Sigmoid colon (tissue), 7 donors: ENCODE measurements at regions of chr12 and their contacts with region 1.

Region 1: GRCh38 chr12:51531978-51532497 is 59.0 kb upstream of the SCN8A start:
- DNase-seq: peak; percentile 70
- H3K4me3 ChIP-seq: no peak overlapping the region
- H3K27ac ChIP-seq: no peak overlapping the region
- H3K4me1 ChIP-seq: peaks cover 0 to 3% (median 0%) of the 10 kb centered on the region in 4 donors
- H3K27me3 ChIP-seq: peaks cover 0 to 34% (median 3%) of the 10 kb centered on the region in 3 donors
- CTCF ChIP-seq: peak; percentile 33 to 76 (median 64)
- EP300 ChIP-seq: no peak
- POLR2A ChIP-seq: no peak

Region 2: GRCh38 chr12:51269174-51270066 is 262.6 kb before region 1 on chr12:
- intact Hi-C with region 1: loop called (anchors 10 kb)
- DNase-seq: no peak
- H3K4me3 ChIP-seq: peak overlapping the region; percentile 50 to 81 (median 60)
- H3K27ac ChIP-seq: peak overlapping the region in 3 of 4 donors; percentile 60 to 68 (median 61)
- H3K4me1 ChIP-seq: peaks cover 0 to 19% (median 8%) of the 10 kb centered on the region in 4 donors
- H3K27me3 ChIP-seq: peaks cover 0 to 34% (median 11%) of the 10 kb centered on the region in 3 donors
- CTCF ChIP-seq: peak in 1 of 4 experiments; percentile 31
- EP300 ChIP-seq: no peak
- POLR2A ChIP-seq: no peak

Region 3: DNA sequence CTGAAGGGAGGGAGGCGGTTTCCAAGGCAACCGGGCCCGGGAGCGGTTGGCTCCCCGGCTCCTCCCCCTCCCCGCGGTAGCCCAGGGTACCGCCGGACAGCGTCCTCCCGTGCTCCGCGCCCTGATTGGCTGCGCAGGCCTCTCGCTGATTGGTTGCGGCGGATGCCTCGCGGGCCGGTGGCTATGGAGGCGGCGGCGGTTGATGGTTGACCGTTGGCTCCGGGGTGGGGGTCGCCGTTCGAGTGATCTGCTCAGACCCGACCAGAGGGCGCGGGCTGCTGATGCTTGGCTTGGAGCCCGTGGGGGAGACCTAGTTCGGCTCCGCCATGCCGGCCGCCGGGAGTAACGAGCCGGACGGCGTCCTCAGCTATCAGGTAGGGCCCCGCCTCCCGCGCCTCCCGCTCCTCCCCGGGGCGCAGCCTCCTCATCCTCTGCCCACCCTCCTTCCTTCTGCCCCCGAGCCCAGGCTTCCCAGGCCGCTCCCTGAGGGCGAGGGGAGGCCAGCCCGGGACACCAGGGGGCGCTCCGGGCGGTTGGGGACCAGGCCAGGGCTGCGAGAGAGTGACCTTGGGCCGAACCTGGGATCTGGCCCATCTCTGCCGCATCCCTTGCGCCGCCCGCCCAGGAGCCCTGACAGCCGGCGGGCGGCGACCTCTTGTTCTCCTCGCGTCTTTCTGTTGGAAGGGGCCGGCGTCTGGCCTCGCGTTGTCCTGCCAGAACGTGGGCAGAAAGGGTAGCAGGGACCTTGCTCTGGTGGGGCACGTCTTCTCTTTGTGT is 107.2 kb before region 1 on chr12 and contains the start of gene SLC4A8:
- intact Hi-C with region 1: loop called (anchors 5 kb)
- DNase-seq: peak; percentile 85
- H3K4me3 ChIP-seq: peak within 1 kb of the TSS; percentile 20 to 57 (median 50)
- H3K27ac ChIP-seq: peak within 1 kb of the TSS in 1 of 4 donors; percentile 13
- H3K4me1 ChIP-seq: peaks cover 0 to 12% (median 11%) of the 10 kb centered on the region in 4 donors
- H3K27me3 ChIP-seq: peaks cover 0 to 7% (median 4%) of the 10 kb centered on the region in 3 donors
- CTCF ChIP-seq: peak; percentile 21 to 59 (median 39)
- EP300 ChIP-seq: no peak
- POLR2A ChIP-seq: no peak
- total RNA-seq, gene SLC4A8: 0.16 to 3.0 (median 1.3) TPM